Activated CD4-positive, alpha-beta T cell treated with anti-CD3 and anti-CD28 coated beads for 36 hours (primary cell): ENCODE measurements at regions of chr4 and their contacts with region 1.

Region 1: DNA sequence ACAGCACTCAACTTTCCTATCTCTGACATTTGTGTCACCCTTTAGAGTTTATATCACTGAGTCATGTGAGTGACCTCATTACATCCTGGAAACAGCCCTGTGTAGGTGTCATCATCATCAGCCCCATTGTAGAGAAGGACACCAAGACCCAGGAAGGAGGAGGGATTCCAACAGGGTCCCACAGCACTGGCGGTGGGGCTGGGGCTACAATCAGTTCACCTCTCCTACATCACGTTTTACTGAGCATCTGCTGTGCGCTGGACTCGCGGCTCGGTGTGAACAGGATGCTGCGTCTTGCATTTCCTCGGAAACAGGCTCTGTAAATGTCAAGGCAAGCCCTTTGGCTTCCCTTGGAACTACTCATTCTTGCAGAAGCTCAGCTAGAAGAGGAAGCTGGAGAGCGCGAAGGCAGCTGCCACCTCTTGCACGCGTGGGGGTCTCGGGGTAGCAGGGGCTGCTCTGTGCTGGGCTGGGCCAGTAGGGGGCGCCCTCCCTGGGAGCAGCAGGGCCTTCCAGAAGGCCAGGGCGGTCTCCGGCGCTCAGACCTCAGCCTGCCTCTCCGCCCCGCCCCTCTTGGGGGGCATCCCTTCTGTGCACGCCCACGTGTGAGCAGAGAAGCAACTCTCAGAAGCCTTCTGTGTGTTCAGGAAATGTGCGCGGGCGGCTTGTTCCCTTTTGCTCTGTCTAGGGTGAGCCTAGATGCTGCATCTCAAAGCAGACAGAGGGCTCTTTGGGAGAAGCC is 29.0 kb downstream of the REELD1 start:
- DNase-seq: peak; percentile 90
- ATAC-seq: peak; percentile 79
- H3K4me3 Mint-ChIP-seq: peak overlapping the region; percentile 66
- H3K27ac Mint-ChIP-seq: peak overlapping the region; percentile 85
- H3K4me1 Mint-ChIP-seq: peaks cover 41% of the 10 kb centered on the region
- H3K27me3 Mint-ChIP-seq: no peaks in the 10 kb centered on the region

Region 2: GRCh38 chr4:146132445-146132844 is 110.9 kb before region 1 on chr4:
- CTCF ChIA-PET with region 1: no interaction called
- POLR2A ChIA-PET with region 1: no interaction called
- intact Hi-C with region 1: loop called in 1 of 2 experiments (anchors 1 kb)
- DNase-seq: peak; percentile 81
- ATAC-seq: peak; percentile 99
- H3K4me3 Mint-ChIP-seq: no peak overlapping the region
- H3K27ac Mint-ChIP-seq: no peak overlapping the region
- H3K4me1 Mint-ChIP-seq: peaks cover 13% of the 10 kb centered on the region
- H3K27me3 Mint-ChIP-seq: peaks cover 5% of the 10 kb centered on the region

Region 3: GRCh38 chr4:146333187-146333894 is 90.0 kb after region 1 on chr4:
- CTCF ChIA-PET with region 1: interaction called, 3 read pairs
- POLR2A ChIA-PET with region 1: no interaction called
- intact Hi-C with region 1: loop called in 1 of 2 experiments (anchors 1 kb)
- DNase-seq: peak; percentile 43
- ATAC-seq: peak; percentile 91
- H3K4me3 Mint-ChIP-seq: no peak overlapping the region
- H3K27ac Mint-ChIP-seq: no peak overlapping the region
- H3K4me1 Mint-ChIP-seq: peaks cover 7% of the 10 kb centered on the region
- H3K27me3 Mint-ChIP-seq: no peaks in the 10 kb centered on the region

Region 4: GRCh38 chr4:146522098-146522868 is 279.0 kb after region 1 on chr4:
- CTCF ChIA-PET with region 1: no interaction called
- POLR2A ChIA-PET with region 1: no interaction called
- intact Hi-C with region 1: loop called in 1 of 2 experiments (anchors 1 kb)
- DNase-seq: peak; percentile 91
- ATAC-seq: peak; percentile 77
- H3K4me3 Mint-ChIP-seq: no peak overlapping the region
- H3K27ac Mint-ChIP-seq: no peak overlapping the region
- H3K4me1 Mint-ChIP-seq: peaks cover 27% of the 10 kb centered on the region
- H3K27me3 Mint-ChIP-seq: no peaks in the 10 kb centered on the region

Region 5: DNA sequence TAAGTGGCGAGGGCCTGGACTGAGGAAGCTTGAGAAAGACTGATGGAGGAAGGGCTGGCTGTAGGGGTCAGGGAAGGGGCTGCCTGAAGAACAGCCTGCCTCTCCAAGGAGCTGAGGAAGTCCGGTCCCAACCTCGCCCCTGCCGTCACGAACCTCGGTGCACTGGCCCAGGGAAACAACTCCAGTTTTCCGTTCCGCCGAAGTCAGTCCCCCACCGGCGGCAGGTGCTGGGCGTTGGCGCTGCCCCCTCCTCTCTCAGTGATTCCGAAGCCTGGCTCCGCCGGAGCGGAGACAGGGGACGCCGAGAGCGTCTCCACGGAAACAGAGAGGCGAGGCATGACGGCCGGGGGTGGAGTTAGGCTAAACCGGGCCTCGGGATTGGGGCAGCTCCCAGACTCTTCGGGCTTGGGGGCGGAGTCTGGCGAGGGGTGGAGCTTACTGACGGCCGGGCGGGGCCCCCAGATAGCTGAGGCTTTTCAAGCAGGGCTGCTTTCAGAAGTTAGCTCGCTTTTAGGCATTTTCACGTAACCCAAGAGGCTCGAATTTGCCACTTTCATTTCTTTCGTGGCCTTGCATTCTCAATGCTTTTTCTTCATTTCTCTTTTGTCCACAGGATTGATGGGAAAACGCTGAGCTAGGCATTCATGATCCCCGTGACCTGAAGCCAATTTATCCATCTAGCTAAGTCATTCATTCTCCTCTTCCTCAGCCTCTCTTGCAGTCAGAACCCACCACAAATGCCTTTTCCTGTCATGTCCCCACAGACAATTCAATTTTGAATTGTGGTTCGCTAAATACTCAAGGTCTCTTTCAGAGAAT is 702.5 kb after region 1 on chr4 and contains the start of gene TTC29:
- CTCF ChIA-PET with region 1: interaction called, 3 read pairs
- POLR2A ChIA-PET with region 1: no interaction called
- intact Hi-C with region 1: loop called in 1 of 2 experiments (anchors 1 kb)
- DNase-seq: peak; percentile 94
- ATAC-seq: peak; percentile 100
- H3K4me3 Mint-ChIP-seq: peak within 1 kb of the TSS; percentile 71
- H3K27ac Mint-ChIP-seq: peak within 1 kb of the TSS; percentile 2
- H3K4me1 Mint-ChIP-seq: peaks cover 25% of the 10 kb centered on the region
- H3K27me3 Mint-ChIP-seq: peaks cover 16% of the 10 kb centered on the region
- total RNA-seq, gene TTC29: not detected